ENCODE measurements at regions of chr19 and their contacts with region 1.

Region 1: GRCh38 chr19:55418185-55418584 is 10.6 kb upstream of the UBE2S start:
- DNase-seq: peak; percentile 62
- H3K4me3 Mint-ChIP-seq: no peak overlapping the region
- H3K27ac Mint-ChIP-seq: no peak overlapping the region
- H3K4me1 Mint-ChIP-seq: peaks cover 18% of the 10 kb centered on the region
- H3K27me3 Mint-ChIP-seq: no peaks in the 10 kb centered on the region

Region 2: GRCh38 chr19:55141696-55142095 is 276.5 kb before region 1 on chr19:
- CTCF ChIA-PET with region 1: interaction called, 22 read pairs
- POLR2A ChIA-PET with region 1: no interaction called
- intact Hi-C with region 1: no loop called
- DNase-seq: no peak
- H3K4me3 Mint-ChIP-seq: no peak overlapping the region
- H3K27ac Mint-ChIP-seq: no peak overlapping the region
- H3K4me1 Mint-ChIP-seq: peaks cover 3% of the 10 kb centered on the region
- H3K27me3 Mint-ChIP-seq: peaks cover 45% of the 10 kb centered on the region

Region 3: DNA sequence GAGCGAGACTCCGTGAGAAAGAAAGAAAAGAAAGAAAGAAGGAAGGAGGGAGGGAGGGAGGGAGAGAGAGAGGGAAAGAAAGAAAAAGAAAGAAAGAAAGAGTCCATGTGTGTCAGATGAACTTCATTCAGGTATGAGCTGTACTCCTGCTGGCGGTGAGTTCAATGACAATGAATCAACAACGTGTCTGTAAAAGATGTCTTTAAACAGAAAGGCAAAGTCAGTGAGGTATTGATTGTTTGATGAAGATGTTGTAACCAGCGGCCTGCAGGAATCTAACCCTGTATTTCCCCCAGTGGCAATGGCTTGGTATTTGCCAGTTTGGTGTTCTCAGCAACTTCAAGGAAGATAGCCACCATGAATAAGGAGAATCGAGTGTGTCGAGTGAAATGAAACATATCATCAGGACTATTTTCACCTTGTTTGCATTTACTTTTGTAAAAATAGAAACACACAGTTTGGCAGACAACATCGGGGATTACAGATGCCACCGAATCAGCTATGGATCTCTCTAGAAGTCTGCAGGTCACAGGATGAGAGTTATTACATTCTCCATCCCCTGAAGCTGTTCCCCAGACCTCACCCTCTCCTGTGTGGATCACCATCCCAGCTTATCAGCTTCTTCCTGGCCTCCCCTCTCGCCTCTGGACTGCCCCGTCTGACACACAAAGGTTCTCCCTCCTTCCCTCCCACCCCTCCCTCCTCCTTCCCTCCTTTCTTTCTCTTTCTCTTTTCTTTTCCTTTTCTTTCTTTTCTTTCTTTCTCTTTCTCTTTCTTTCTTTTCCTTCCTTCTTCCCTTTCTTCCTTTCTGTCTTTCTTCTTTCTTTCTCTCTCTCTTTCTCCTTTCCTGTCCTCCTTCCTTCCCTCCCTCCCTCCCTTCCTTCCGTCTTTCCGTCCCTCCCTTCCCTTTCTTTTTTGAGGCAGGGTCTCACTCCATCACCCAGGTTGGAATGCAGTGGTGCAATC is 135.3 kb after region 1 on chr19:
- CTCF ChIA-PET with region 1: no interaction called
- POLR2A ChIA-PET with region 1: no interaction called
- intact Hi-C with region 1: no loop called
- DNase-seq: no peak
- H3K4me3 Mint-ChIP-seq: no peak overlapping the region
- H3K27ac Mint-ChIP-seq: no peak overlapping the region
- H3K4me1 Mint-ChIP-seq: no peaks in the 10 kb centered on the region
- H3K27me3 Mint-ChIP-seq: peaks cover 4% of the 10 kb centered on the region